Naive thymus-derived CD4-positive, alpha-beta T cell (primary cell): ENCODE measurements at regions of chr6 and their contacts with region 1.

Region 1: DNA sequence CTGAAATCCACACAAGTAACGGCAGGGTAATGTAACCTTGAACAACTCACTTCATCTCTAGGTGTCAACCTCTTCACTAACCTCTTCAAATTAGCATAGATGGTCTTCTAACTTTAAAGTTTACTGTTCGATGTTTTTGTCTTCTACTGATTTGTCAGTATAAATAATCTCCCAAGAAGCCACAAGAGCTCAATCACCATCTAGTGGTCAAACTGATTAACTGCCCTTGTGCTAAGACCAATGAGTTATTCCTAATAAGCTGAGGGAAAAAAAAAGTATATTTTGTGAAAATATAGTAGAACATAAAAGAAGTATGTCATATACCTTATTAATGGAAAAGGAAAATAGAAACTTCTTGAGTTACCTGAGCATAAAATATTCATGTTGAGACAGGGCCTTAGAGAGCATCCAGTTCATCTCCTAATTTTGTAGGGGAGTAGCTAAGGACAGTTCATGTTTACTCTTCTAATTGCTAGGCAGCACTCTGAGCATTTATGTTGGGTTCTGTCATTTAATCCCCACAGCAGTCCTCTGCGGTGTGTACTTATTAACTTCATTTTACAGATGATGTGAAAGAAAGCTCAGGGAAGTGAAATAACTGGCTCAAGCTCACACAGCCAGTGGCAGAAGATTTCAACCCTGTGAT is 317.1 kb downstream of the ESR1 start:
- DNase-seq: peak in 4 of 9 donors; percentile 8 to 42 (median 22)
- ATAC-seq: peak; percentile 42
- H3K4me3 ChIP-seq: no peak overlapping the region
- H3K4me3 Mint-ChIP-seq: no peak overlapping the region
- H3K27ac ChIP-seq: no peak overlapping the region
- H3K27ac Mint-ChIP-seq: peak overlapping the region in 6 of 9 donors; percentile 13 to 87 (median 74)
- H3K4me1 ChIP-seq: no peaks in the 10 kb centered on the region
- H3K4me1 Mint-ChIP-seq: peaks cover 0 to 6% (median 0%) of the 10 kb centered on the region in 7 donors
- H3K27me3 ChIP-seq: no peaks in the 10 kb centered on the region
- H3K27me3 Mint-ChIP-seq: no peaks in the 10 kb centered on the region

Region 2: DNA sequence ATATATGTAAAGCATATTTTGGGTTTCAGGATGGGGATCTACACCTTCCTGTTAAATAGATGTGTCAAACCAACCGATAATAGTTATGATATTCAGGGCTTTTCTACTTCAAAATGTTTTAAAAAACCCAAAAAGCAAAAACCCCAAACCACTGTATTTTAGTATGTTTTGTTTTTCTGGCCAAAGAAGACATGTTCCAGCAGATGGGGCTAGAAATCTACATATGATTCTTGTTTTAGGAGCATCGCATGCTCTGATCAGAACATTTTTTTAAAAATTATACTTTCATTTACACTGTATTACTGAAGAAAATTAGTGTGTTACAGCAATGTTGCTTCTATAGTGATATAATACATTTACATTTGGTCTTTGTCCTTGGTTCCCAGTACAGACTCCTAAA is 683.6 kb before region 1 on chr6:
- CTCF ChIA-PET with region 1: no interaction called
- POLR2A ChIA-PET with region 1: no interaction called
- intact Hi-C with region 1: loop called in 1 of 2 experiments (anchors 10 kb)
- DNase-seq: peak in 7 of 9 donors; percentile 10 to 46 (median 33)
- ATAC-seq: peak; percentile 47
- H3K4me3 ChIP-seq: no peak overlapping the region
- H3K4me3 Mint-ChIP-seq: no peak overlapping the region
- H3K27ac ChIP-seq: no peak overlapping the region
- H3K27ac Mint-ChIP-seq: peak overlapping the region in 3 of 9 donors; percentile 2 to 23 (median 20)
- H3K4me1 ChIP-seq: peaks cover 6 to 8% of the 10 kb centered on the region in 2 donors
- H3K4me1 Mint-ChIP-seq: peaks cover 16 to 62% (median 47%) of the 10 kb centered on the region in 7 donors
- H3K27me3 ChIP-seq: no peaks in the 10 kb centered on the region
- H3K27me3 Mint-ChIP-seq: no peaks in the 10 kb centered on the region

Region 3: GRCh38 chr6:151675746-151676416 is 448.7 kb before region 1 on chr6:
- CTCF ChIA-PET with region 1: interaction called, 3 read pairs
- POLR2A ChIA-PET with region 1: no interaction called
- intact Hi-C with region 1: loop called (anchors 1 kb)
- DNase-seq: peak in 8 of 9 donors; percentile 8 to 54 (median 44)
- ATAC-seq: peak; percentile 79
- H3K4me3 ChIP-seq: no peak overlapping the region
- H3K4me3 Mint-ChIP-seq: no peak overlapping the region
- H3K27ac ChIP-seq: no peak overlapping the region
- H3K27ac Mint-ChIP-seq: peak overlapping the region in 1 of 9 donors; percentile 33
- H3K4me1 ChIP-seq: no peaks in the 10 kb centered on the region
- H3K4me1 Mint-ChIP-seq: peaks cover 0 to 6% (median under 1%) of the 10 kb centered on the region in 7 donors
- H3K27me3 ChIP-seq: no peaks in the 10 kb centered on the region
- H3K27me3 Mint-ChIP-seq: peaks cover 0 to 4% (median under 1%) of the 10 kb centered on the region in 5 donors

Region 4: GRCh38 chr6:151765444-151765886 is 359.1 kb before region 1 on chr6:
- CTCF ChIA-PET with region 1: interaction called, 3 read pairs
- POLR2A ChIA-PET with region 1: no interaction called
- intact Hi-C with region 1: loop called (anchors 2 kb)
- DNase-seq: peak in 6 of 9 donors; percentile 17 to 55 (median 36)
- ATAC-seq: peak; percentile 64
- H3K4me3 ChIP-seq: no peak overlapping the region
- H3K4me3 Mint-ChIP-seq: no peak overlapping the region
- H3K27ac ChIP-seq: no peak overlapping the region
- H3K27ac Mint-ChIP-seq: no peak overlapping the region
- H3K4me1 ChIP-seq: no peaks in the 10 kb centered on the region
- H3K4me1 Mint-ChIP-seq: peaks cover 0 to 29% (median 10%) of the 10 kb centered on the region in 7 donors
- H3K27me3 ChIP-seq: no peaks in the 10 kb centered on the region
- H3K27me3 Mint-ChIP-seq: peaks cover 0 to 34% (median 7%) of the 10 kb centered on the region in 5 donors

Region 5: GRCh38 chr6:152338335-152339125 is 214.0 kb after region 1 on chr6:
- CTCF ChIA-PET with region 1: no interaction called
- POLR2A ChIA-PET with region 1: no interaction called
- intact Hi-C with region 1: no loop called
- DNase-seq: peak; percentile 23 to 67 (median 51)
- ATAC-seq: peak; percentile 90
- H3K4me3 ChIP-seq: no peak overlapping the region
- H3K4me3 Mint-ChIP-seq: no peak overlapping the region
- H3K27ac ChIP-seq: no peak overlapping the region
- H3K27ac Mint-ChIP-seq: no peak overlapping the region
- H3K4me1 ChIP-seq: no peaks in the 10 kb centered on the region
- H3K4me1 Mint-ChIP-seq: peaks cover 0 to 5% (median 0%) of the 10 kb centered on the region in 7 donors
- H3K27me3 ChIP-seq: no peaks in the 10 kb centered on the region
- H3K27me3 Mint-ChIP-seq: peaks cover 0 to 11% (median 0%) of the 10 kb centered on the region in 5 donors